ENCODE measurements at regions of chr6 and their contacts with region 1.

Region 1: DNA sequence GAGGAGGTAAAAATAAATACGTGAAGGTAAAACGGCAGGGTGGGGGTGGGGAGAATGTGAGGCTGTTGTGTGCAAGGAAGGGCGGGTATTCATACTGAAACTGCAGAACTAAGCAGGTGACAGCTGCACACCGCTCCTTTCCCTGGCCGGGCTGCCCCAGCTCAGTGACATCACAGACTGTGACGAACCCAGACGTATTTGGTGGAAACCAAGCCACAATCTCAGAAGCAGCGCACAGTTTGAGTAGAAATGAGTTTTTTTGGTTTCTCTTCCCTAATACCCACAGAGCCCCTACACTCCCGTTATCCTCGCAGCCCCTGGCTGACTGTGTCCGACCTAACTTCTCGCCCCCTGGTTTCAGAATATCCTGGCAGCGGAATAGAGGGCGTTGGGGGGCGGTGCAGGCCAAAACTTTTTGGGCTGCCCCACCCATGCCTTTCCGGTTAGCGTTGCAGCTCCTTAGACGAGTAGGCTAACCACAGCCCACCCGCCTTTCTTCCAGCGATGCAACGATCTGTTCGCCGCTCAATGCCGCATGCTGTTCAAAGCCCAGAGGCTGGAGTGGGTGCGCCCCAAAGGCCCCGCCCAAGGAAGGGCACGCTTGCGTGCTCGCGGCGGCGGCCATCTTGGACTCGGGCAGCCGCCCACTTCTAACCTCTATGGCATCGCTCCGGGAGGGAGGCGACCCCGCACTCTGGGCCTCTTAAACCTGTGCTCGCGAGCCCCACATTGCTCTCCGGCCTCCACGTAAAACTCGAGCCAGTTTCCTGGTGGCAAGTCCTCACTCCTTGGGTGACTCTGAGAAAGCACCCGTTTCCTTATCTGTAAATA is 9.1 kb downstream of the BAK1 start:
- DNase-seq: peak; percentile 98
- H3K4me3 Mint-ChIP-seq: peak overlapping the region; percentile 90
- H3K27ac Mint-ChIP-seq: peak overlapping the region; percentile 100
- H3K4me1 Mint-ChIP-seq: peaks cover 53% of the 10 kb centered on the region
- H3K27me3 Mint-ChIP-seq: no peaks in the 10 kb centered on the region

Region 2: DNA sequence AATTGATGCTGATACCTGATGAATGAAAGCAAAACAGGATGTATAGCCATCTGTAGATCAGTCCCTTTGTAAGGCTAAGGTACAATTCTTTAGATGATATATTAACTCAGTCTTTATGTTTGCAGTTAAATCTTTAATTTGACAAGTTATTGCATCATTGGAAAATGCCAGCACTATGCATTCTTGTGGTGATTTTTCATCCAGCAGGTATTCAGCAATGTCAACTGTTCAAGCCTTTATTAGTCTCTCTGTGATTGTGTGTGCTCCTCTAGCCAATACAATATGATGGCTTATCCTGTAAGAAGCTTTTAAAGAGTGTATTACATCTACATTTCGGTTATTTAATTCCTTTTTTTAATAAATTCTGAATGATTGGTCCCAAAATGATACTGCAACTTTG is 664.5 kb before region 1 on chr6:
- CTCF ChIA-PET with region 1: no interaction called
- intact Hi-C with region 1: no loop called
- DNase-seq: no peak
- H3K4me3 Mint-ChIP-seq: no peak overlapping the region
- H3K27ac Mint-ChIP-seq: no peak overlapping the region
- H3K4me1 Mint-ChIP-seq: no peaks in the 10 kb centered on the region
- H3K27me3 Mint-ChIP-seq: peaks cover 2% of the 10 kb centered on the region

Region 3: DNA sequence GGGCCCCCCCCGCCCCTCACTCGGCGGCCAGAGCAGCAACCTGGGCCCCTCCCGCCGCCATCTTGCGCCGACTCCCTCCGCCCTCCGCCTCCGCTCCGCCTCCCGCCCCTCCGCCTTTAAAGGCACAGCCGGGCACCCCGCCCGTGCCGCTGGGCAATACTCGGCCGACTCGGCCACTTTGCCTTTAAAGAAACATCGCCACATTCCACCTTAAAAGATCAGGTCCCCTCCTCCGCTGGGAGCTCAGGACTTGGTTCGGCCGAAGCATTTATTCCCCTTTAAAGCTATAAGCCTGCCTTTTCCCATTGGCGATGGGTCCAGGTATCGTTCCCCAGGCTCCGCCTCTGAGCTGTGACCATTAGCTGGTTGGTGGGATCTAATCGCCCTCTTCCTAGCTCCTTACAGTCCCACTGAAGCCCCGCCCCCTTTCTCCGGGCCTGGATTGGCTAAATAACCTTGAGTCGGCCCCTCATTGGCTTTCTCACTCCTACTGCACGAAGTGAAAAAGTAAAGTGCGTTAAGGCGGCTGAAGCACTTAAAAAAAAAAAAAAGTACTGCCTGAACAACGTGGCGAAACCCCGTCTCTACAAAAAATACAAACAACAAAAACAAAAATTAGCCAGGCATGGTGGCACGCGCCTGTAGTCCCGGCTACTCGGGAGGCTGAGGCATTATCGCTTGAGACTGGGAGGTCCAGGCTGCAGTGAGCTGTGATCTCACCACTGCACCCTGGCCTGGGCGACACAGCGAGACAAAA is 253.2 kb before region 1 on chr6 and contains the start of gene ZBTB22:
- CTCF ChIA-PET with region 1: no interaction called
- intact Hi-C with region 1: loop called (anchors 5 kb)
- DNase-seq: peak; percentile 97
- H3K4me3 Mint-ChIP-seq: peak within 1 kb of the TSS; percentile 94
- H3K27ac Mint-ChIP-seq: peak within 1 kb of the TSS; percentile 95
- H3K4me1 Mint-ChIP-seq: peaks cover 72% of the 10 kb centered on the region
- H3K27me3 Mint-ChIP-seq: no peaks in the 10 kb centered on the region
- total RNA-seq, gene ZBTB22: 8.8 to 9.0 TPM

Region 4: DNA sequence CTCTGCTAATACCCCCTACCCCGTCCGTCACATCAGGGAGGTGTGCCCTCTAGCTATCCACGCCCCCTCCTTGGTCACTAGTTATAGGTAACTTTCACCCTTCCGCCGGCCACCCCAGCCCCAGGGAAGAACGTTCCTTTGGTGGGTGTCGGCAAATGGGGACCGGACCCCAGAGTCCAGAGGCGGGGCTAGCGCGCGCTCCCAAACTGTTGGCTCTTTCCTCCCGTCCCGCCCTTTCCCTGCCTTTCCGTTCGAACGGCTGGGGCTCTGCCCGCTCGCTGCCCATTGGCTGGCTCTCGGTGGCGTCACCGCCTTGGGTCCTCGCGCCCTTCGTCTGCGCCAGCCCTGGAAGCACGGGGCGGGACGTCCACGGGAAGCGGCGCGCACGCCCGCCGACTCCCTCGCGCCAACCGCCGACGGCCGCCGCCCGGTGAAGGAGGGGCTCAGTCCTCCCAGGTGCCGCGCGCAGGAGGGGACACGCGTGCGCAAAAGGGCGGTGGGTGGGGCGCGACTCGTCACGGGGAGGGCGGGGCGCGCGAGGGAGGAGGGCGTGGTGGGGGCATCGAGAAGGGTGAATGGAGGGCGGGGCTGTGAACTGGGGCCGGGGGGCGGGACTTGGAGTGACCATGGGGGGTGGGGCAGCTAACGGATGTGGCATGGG is 160.8 kb before region 1 on chr6:
- CTCF ChIA-PET with region 1: no interaction called
- intact Hi-C with region 1: loop called (anchors 1 kb)
- DNase-seq: peak; percentile 98
- H3K4me3 Mint-ChIP-seq: peak overlapping the region; percentile 87
- H3K27ac Mint-ChIP-seq: peak overlapping the region; percentile 93
- H3K4me1 Mint-ChIP-seq: peaks cover 39% of the 10 kb centered on the region
- H3K27me3 Mint-ChIP-seq: no peaks in the 10 kb centered on the region

Region 5: GRCh38 chr6:33430991-33431879 is 139.8 kb before region 1 on chr6:
- CTCF ChIA-PET with region 1: no interaction called
- intact Hi-C with region 1: loop called (anchors 2 kb)
- DNase-seq: peak; percentile 86
- H3K4me3 Mint-ChIP-seq: peak overlapping the region; percentile 67
- H3K27ac Mint-ChIP-seq: peak overlapping the region; percentile 64
- H3K4me1 Mint-ChIP-seq: peaks cover 60% of the 10 kb centered on the region
- H3K27me3 Mint-ChIP-seq: no peaks in the 10 kb centered on the region

Region 6: DNA sequence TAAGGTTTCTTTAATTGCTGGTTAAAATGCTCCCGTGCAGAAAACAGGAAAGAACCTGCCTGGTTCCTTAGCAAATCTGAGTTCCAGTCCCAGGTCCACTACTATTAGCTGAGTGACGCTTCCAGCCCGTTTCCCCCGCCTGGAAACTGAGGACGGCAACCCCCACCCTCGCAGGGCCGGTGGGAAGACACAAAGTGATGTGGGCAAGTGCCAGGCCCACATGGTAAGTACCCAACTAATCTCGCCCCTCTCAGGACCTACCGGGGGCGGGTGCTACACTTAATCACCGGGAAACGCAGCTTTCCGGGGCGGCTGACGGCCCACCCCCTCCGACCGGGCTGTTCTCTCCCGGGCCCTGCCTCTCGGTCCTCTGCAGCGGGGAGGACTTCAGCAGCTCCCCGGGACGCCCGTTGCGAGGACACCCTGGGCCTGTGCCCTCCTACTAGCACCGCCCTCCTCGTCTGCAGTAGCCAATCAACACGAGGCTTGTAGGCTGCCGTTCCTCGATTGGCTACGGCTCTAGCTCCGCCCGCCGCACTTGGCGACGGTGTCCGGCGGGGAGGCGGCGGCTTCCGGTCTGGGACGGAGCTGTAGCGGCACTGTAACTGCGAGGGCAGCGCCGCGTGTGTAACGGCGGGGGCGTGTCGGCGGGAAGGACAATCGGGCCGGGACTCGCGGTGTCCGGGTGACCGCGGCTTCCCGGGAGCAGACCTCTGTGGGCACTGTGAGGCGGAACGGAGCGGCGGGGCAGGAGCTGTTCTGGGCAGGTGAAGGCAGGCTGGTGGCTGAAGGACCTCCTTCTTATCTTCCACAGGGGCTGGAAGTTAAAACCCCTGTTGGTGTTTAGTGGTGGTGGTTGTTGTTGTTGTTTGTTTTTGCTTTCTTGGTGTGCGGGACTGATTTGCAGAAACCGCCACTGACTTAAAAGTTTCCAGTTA is 116.7 kb before region 1 on chr6 and contains the start of gene ZBTB9:
- CTCF ChIA-PET with region 1: no interaction called
- intact Hi-C with region 1: loop called (anchors 1 kb)
- DNase-seq: peak; percentile 96
- H3K4me3 Mint-ChIP-seq: peak within 1 kb of the TSS; percentile 87
- H3K27ac Mint-ChIP-seq: peak within 1 kb of the TSS; percentile 85
- H3K4me1 Mint-ChIP-seq: peaks cover 47% of the 10 kb centered on the region
- H3K27me3 Mint-ChIP-seq: no peaks in the 10 kb centered on the region
- total RNA-seq, gene ZBTB9: 5.0 to 6.5 TPM

Region 7: DNA sequence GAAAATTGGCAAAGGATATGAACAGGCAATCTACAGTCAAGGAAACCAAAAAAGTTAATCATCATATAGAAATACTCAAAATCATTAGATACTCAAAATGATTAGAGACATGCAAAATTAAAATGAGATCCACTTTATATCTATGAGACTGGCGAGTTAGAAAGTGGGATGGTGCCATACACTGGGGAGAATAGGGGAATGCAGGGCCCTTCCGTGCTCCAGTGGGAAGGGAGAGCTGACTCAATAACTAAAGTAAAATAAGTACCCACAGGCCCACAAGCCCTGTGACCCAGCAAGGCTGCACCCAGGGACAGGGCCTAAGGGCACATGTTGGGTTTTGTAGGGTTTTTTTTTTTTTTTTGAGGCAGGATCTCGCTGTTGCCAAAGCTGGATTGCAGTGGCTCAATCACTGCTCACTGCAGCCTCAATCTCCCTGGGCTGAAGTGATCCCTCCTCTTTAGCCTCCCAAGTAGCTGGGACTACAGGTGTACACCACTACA is 35.9 kb before region 1 on chr6:
- CTCF ChIA-PET with region 1: no interaction called
- intact Hi-C with region 1: loop called (anchors 1 kb)
- DNase-seq: no peak
- H3K4me3 Mint-ChIP-seq: no peak overlapping the region
- H3K27ac Mint-ChIP-seq: no peak overlapping the region
- H3K4me1 Mint-ChIP-seq: peaks cover 25% of the 10 kb centered on the region
- H3K27me3 Mint-ChIP-seq: no peaks in the 10 kb centered on the region

Region 8: GRCh38 chr6:33547499-33547898 is 23.5 kb before region 1 on chr6:
- CTCF ChIA-PET with region 1: no interaction called
- intact Hi-C with region 1: loop called (anchors 1 kb)
- DNase-seq: no peak
- H3K4me3 Mint-ChIP-seq: no peak overlapping the region
- H3K27ac Mint-ChIP-seq: no peak overlapping the region
- H3K4me1 Mint-ChIP-seq: peaks cover 20% of the 10 kb centered on the region
- H3K27me3 Mint-ChIP-seq: no peaks in the 10 kb centered on the region

Region 9: DNA sequence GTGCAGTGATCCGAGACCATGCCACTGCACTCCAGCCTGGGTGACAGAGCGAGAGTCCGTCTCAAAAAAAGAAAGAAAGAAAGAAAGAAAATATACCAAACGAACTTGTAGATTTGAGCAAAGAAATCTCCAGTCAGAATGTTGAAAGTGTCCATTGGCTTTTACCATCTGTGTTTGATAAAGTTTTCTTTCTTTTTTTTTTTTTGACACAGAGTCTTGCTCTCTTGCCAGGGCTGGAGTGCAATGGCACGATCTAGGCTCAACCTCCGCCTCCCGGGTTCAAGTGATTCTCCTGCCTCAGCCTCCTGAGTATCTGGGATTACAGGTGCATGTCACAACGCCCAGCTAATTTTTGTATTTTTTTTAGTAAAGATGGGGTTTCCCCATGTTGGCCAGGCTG is 12.2 kb before region 1 on chr6:
- CTCF ChIA-PET with region 1: no interaction called
- intact Hi-C with region 1: no loop called
- DNase-seq: no peak
- H3K4me3 Mint-ChIP-seq: no peak overlapping the region
- H3K27ac Mint-ChIP-seq: no peak overlapping the region
- H3K4me1 Mint-ChIP-seq: peaks cover 2% of the 10 kb centered on the region
- H3K27me3 Mint-ChIP-seq: no peaks in the 10 kb centered on the region

Region 10: GRCh38 chr6:34036357-34037069 is 465.5 kb after region 1 on chr6:
- CTCF ChIA-PET with region 1: no interaction called
- intact Hi-C with region 1: no loop called
- DNase-seq: no peak
- H3K4me3 Mint-ChIP-seq: no peak overlapping the region
- H3K27ac Mint-ChIP-seq: no peak overlapping the region
- H3K4me1 Mint-ChIP-seq: no peaks in the 10 kb centered on the region
- H3K27me3 Mint-ChIP-seq: no peaks in the 10 kb centered on the region

Measured in activated naive CD4-positive, alpha-beta T cell treated with anti-CD3 and anti-CD28 coated beads for 36 hours (primary cell).